ENCODE measurements at regions of chr9 and their contacts with region 1.

Region 1: GRCh38 chr9:37079370-37080164 is 40.8 kb upstream of the ZCCHC7 start:
- DNase-seq: peak; percentile 93
- H3K4me3 ChIP-seq: peak overlapping the region; percentile 34 to 92 (median 79)
- H3K27ac ChIP-seq: peak overlapping the region; percentile 54
- H3K4me1 ChIP-seq: peaks cover 4% of the 10 kb centered on the region
- H3K27me3 ChIP-seq: peaks cover 0 to 4% of the 10 kb centered on the region in 2 experiments
- CTCF ChIP-seq: no peak
- POLR2A ChIP-seq: no peak

Region 2: GRCh38 chr9:37027582-37028419 is 51.8 kb before region 1 on chr9:
- CTCF ChIA-PET with region 1: interaction called, 3 read pairs
- POLR2A ChIA-PET with region 1: no interaction called
- dilution Hi-C with region 1: no loop called
- intact Hi-C with region 1: loop called (anchors 1 kb)
- DNase-seq: peak; percentile 93
- H3K4me3 ChIP-seq: no peak overlapping the region
- H3K27ac ChIP-seq: no peak overlapping the region
- H3K4me1 ChIP-seq: peaks cover 7% of the 10 kb centered on the region
- H3K27me3 ChIP-seq: peaks cover 89 to 97% of the 10 kb centered on the region in 2 experiments
- CTCF ChIP-seq: no peak
- POLR2A ChIP-seq: no peak

Region 3: GRCh38 chr9:37262410-37262809 is 182.8 kb after region 1 on chr9:
- CTCF ChIA-PET with region 1: interaction called, 3 read pairs
- POLR2A ChIA-PET with region 1: no interaction called
- dilution Hi-C with region 1: no loop called
- intact Hi-C with region 1: loop called (anchors 5 kb)
- DNase-seq: peak; percentile 60
- H3K4me3 ChIP-seq: no peak overlapping the region
- H3K27ac ChIP-seq: no peak overlapping the region
- H3K4me1 ChIP-seq: no peaks in the 10 kb centered on the region
- H3K27me3 ChIP-seq: no peaks in the 10 kb centered on the region
- CTCF ChIP-seq: peak; percentile 54 to 55
- POLR2A ChIP-seq: no peak